Activated B cell treated with CpG ODN at 0.5 μM for 24 hours (primary cell): ENCODE measurements at regions of chr6 and their contacts with region 1.

Region 1: DNA sequence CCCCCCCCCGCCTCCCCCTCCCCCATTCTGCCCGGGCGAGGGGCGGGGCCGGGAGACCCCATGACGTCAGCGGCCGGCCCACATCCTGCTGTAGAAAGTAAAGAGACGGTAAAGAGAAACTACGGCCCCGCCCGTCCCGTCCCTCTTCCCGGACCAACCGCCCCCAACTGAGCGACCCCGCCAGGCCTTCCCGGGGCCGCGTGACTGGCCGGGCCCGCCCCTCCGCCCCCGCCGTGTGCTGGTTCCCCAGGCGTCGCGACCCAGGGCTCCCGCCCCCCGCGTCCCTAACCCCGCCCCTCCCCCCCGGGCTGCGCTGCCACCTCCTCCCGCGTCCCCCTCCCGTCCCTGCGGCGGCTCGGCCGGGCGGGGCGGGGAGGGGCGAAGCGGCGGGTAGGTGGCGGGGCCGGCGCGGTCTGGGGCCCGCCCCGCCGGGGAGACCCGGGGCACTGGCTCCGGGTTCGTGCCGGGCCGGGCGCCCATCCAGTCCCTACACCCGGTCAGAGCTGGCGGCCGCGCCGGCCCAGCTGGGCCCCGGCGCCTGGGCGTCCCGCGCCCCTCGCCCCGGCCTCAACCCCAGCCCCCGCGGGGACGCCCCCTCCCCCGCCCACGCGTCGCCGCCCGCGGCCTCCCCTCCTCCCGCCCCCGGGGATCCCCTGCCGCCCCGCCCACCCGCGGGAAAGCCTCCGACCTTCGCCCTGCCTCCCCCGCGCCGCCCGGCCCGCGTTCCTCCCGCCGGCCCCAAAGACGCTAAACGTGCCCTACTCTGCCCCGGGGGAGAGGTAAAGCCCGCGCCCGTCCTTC is 636 bp upstream of the HIVEP1 start:
- DNase-seq: peak; percentile 92
- ATAC-seq: peak; percentile 72
- H3K4me3 Mint-ChIP-seq: peak overlapping the region; percentile 92
- H3K27ac Mint-ChIP-seq: peak overlapping the region; percentile 95
- H3K4me1 Mint-ChIP-seq: peaks cover 50% of the 10 kb centered on the region
- H3K27me3 Mint-ChIP-seq: no peaks in the 10 kb centered on the region
- CTCF ChIP-seq: no peak

Region 2: GRCh38 chr6:11537229-11538051 is 474.0 kb before region 1 on chr6 and contains the start of gene TMEM170B:
- CTCF ChIA-PET with region 1: no interaction called
- POLR2A ChIA-PET with region 1: no interaction called
- intact Hi-C with region 1: loop called (anchors 1 kb)
- DNase-seq: peak; percentile 99
- ATAC-seq: peak; percentile 94
- H3K4me3 Mint-ChIP-seq: peak within 1 kb of the TSS; percentile 84
- H3K27ac Mint-ChIP-seq: peak within 1 kb of the TSS; percentile 74
- H3K4me1 Mint-ChIP-seq: peaks cover 11% of the 10 kb centered on the region
- H3K27me3 Mint-ChIP-seq: no peaks in the 10 kb centered on the region
- CTCF ChIP-seq: no peak
- total RNA-seq, gene TMEM170B: 2.6 and 2.8 TPM in 2 replicates

Region 3: GRCh38 chr6:11876934-11877433 is 134.5 kb before region 1 on chr6:
- CTCF ChIA-PET with region 1: no interaction called
- POLR2A ChIA-PET with region 1: no interaction called
- intact Hi-C with region 1: loop called (anchors 2 kb)
- DNase-seq: no peak
- ATAC-seq: peak; percentile 89
- H3K4me3 Mint-ChIP-seq: peak overlapping the region; percentile 36
- H3K27ac Mint-ChIP-seq: peak overlapping the region; percentile 47
- H3K4me1 Mint-ChIP-seq: peaks cover 20% of the 10 kb centered on the region
- H3K27me3 Mint-ChIP-seq: no peaks in the 10 kb centered on the region
- CTCF ChIP-seq: no peak

Region 4: GRCh38 chr6:12024699-12025434 is 13.4 kb after region 1 on chr6:
- CTCF ChIA-PET with region 1: no interaction called
- POLR2A ChIA-PET with region 1: interaction called, 6 read pairs
- intact Hi-C with region 1: loop called (anchors 1 kb)
- DNase-seq: no peak
- ATAC-seq: no peak
- H3K4me3 Mint-ChIP-seq: no peak overlapping the region
- H3K27ac Mint-ChIP-seq: no peak overlapping the region
- H3K4me1 Mint-ChIP-seq: peaks cover 27% of the 10 kb centered on the region
- H3K27me3 Mint-ChIP-seq: no peaks in the 10 kb centered on the region
- CTCF ChIP-seq: no peak

Region 5: GRCh38 chr6:12075067-12075563 is 63.6 kb after region 1 on chr6:
- CTCF ChIA-PET with region 1: no interaction called
- POLR2A ChIA-PET with region 1: interaction called, 9 read pairs
- intact Hi-C with region 1: loop called (anchors 2 kb)
- DNase-seq: no peak
- ATAC-seq: peak; percentile 25
- H3K4me3 Mint-ChIP-seq: no peak overlapping the region
- H3K27ac Mint-ChIP-seq: no peak overlapping the region
- H3K4me1 Mint-ChIP-seq: peaks cover 33% of the 10 kb centered on the region
- H3K27me3 Mint-ChIP-seq: no peaks in the 10 kb centered on the region
- CTCF ChIP-seq: no peak